CD8-positive, alpha-beta T cell (primary cell): ENCODE measurements at regions of chr4 and their contacts with region 1.

Region 1: DNA sequence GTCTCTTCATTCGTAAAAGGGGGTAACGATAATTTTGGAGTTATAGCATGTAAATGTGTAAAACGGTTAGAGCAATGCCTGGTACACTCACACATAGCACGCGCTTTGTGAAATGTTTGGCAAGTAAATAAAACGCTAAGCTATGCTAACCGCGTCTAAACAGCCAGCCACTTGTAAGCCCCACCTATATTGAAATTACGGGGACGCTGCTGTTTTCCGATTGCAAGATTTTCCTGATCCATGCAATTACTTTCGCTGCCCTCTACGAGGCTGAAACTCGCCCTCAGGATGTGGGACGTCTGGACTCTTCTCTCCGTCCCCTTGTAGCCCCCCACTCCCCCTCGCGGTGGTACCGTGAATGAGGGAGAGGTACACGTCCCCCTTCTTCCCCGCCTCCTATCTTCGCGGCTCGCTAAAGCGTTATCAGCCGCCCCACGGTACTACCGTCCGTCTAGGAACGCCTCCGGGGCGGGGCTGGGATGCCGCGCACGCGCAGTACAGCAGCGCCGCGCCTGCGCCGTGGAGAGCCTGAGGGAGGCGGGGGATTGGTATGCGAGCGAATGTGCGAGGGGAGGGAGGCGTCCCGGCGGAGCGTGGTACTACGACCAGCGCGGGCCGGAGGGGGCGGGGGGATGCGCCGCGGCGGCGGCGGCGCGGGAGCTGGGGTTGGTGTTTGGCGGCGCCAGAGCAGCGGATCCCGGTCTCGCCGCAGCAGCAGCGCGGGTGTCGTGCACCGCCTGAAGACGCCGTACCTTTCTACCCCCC is at the start of gene STIM2:
- DNase-seq: peak; percentile 95 to 100 (median 98)
- ATAC-seq: peak; percentile 62
- H3K4me3 ChIP-seq: peak within 1 kb of the TSS; percentile 70 to 83
- H3K4me3 Mint-ChIP-seq: peak within 1 kb of the TSS; percentile 99
- H3K27ac ChIP-seq: peak within 1 kb of the TSS; percentile 82 to 83
- H3K27ac Mint-ChIP-seq: peak within 1 kb of the TSS; percentile 99
- H3K4me1 ChIP-seq: peaks cover 60% of the 10 kb centered on the region
- H3K4me1 Mint-ChIP-seq: peaks cover 63% of the 10 kb centered on the region
- H3K27me3 ChIP-seq: no peaks in the 10 kb centered on the region
- H3K27me3 Mint-ChIP-seq: no peaks in the 10 kb centered on the region
- CTCF ChIP-seq: no peak
- total RNA-seq, gene STIM2: 61.1 to 67.0 TPM

Region 2: DNA sequence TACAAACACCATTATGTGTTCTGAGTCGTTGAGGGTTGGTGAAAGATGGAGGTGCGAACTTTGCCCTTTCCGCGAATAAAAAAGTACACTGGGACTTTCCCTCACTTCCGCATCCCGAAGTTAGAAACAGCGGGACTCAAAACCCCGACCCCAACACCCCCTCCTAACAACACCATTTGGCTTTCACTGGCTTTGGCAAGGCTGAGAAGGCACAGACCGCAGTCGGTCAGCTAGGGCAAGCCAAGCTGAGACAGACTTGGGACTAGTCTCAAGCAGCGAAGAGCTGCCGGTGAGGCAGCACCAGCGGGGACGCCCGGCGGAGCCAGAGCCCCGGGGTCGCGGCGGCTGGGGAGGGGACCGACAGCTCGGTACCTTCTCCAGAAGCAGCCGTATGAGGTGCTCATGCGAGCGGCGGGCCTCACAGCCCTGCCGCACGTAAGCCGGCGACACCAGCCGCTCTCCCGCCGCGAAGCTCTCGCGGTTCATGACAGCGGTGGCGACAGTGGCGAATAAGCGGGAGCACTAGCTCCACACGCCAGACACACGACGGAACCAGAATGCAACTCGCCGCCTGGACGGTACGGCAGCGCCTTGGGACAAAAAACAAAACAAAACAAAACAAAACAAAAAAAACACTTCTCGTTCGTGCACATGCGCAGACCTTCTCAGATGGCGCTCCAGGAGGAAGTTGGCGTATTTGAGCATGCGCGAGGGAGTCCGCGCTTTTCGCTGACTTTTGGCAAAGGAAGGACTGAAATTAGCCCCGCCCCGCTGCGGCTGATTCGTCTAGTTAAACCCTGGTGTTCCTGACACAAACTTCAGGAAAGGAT is 1700.2 kb before region 1 on chr4 and contains the start of gene SEPSECS:
- CTCF ChIA-PET with region 1: no interaction called
- POLR2A ChIA-PET with region 1: no interaction called
- intact Hi-C with region 1: loop called in 1 of 2 experiments (anchors 10 kb)
- DNase-seq: peak; percentile 82 to 99 (median 94)
- ATAC-seq: peak; percentile 79
- H3K4me3 ChIP-seq: peak within 1 kb of the TSS; percentile 60 to 79
- H3K4me3 Mint-ChIP-seq: peak within 1 kb of the TSS; percentile 91
- H3K27ac ChIP-seq: peak within 1 kb of the TSS; percentile 97 to 98
- H3K27ac Mint-ChIP-seq: peak within 1 kb of the TSS; percentile 94
- H3K4me1 ChIP-seq: peaks cover 18% of the 10 kb centered on the region
- H3K4me1 Mint-ChIP-seq: peaks cover 52% of the 10 kb centered on the region
- H3K27me3 ChIP-seq: no peaks in the 10 kb centered on the region
- H3K27me3 Mint-ChIP-seq: no peaks in the 10 kb centered on the region
- CTCF ChIP-seq: no peak
- total RNA-seq, gene SEPSECS: 12.5 to 13.4 TPM

Region 3: DNA sequence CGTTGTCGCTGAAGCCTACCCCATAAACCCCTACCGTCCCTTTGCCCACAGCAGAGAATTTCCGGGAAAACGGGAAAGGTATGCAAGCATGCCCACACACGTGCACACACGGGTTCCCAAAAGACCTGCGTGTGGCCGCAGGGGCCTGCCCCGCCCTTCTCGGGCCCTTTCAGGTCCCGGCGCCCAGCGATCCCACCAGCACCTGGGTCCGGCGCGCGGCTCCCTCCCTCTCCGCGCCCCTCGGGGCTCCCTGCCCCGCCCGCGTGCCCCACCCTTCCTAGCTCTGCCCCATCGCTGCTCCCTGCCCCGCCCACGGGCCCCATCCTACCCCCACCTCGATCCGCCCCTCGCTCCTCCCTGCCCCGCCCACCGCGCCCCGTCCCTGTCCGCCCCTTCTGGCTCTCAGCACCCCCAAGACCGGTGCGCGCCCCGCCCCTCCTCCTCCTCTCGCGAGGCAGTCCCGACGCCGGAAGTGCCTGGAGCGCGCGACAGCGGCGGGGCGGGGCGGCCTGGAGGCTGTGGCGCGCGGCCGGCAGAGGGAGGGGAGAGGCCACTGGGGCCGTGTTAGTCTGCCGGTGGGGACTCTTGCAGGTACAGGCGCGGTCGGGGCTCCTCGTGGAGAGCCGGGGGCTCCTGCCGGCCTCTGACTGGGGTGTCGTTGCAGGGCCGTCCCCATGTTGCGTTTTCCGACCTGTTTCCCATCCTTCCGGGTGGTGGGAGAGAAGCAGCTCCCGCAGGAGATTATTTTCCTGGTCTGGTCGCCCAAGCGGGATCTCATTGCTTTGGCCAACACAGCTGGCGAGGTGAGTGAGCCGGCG is 1483.4 kb before region 1 on chr4 and contains the start of gene ANAPC4:
- CTCF ChIA-PET with region 1: no interaction called
- POLR2A ChIA-PET with region 1: no interaction called
- intact Hi-C with region 1: loop called (anchors 2 to 5 kb)
- DNase-seq: peak; percentile 95 to 100 (median 98)
- ATAC-seq: peak; percentile 95
- H3K4me3 ChIP-seq: peak within 1 kb of the TSS; percentile 89 to 96
- H3K4me3 Mint-ChIP-seq: no peak within 1 kb of the TSS
- H3K27ac ChIP-seq: peak within 1 kb of the TSS; percentile 60 to 64
- H3K27ac Mint-ChIP-seq: peak within 1 kb of the TSS; percentile 90
- H3K4me1 ChIP-seq: peaks cover 21% of the 10 kb centered on the region
- H3K4me1 Mint-ChIP-seq: peaks cover 16% of the 10 kb centered on the region
- H3K27me3 ChIP-seq: no peaks in the 10 kb centered on the region
- H3K27me3 Mint-ChIP-seq: no peaks in the 10 kb centered on the region
- CTCF ChIP-seq: no peak
- total RNA-seq, gene ANAPC4: 28.0 to 30.5 TPM

Region 4: GRCh38 chr4:26319467-26319948 is 540.8 kb before region 1 on chr4:
- CTCF ChIA-PET with region 1: no interaction called
- POLR2A ChIA-PET with region 1: interaction called, 4 read pairs
- intact Hi-C with region 1: loop called (anchors 1 to 2 kb)
- DNase-seq: peak; percentile 91 to 99 (median 96)
- ATAC-seq: peak; percentile 60
- H3K4me3 ChIP-seq: peak overlapping the region; percentile 91 to 100
- H3K4me3 Mint-ChIP-seq: peak overlapping the region; percentile 99
- H3K27ac ChIP-seq: peak overlapping the region; percentile 83 to 89
- H3K27ac Mint-ChIP-seq: peak overlapping the region; percentile 100
- H3K4me1 ChIP-seq: peaks cover 14% of the 10 kb centered on the region
- H3K4me1 Mint-ChIP-seq: peaks cover 37% of the 10 kb centered on the region
- H3K27me3 ChIP-seq: no peaks in the 10 kb centered on the region
- H3K27me3 Mint-ChIP-seq: no peaks in the 10 kb centered on the region
- CTCF ChIP-seq: no peak

Region 5: GRCh38 chr4:26885912-26886274 is 25.6 kb after region 1 on chr4:
- CTCF ChIA-PET with region 1: interaction called, 4 read pairs
- POLR2A ChIA-PET with region 1: interaction called, 81 read pairs
- intact Hi-C with region 1: loop called (anchors 1 to 2 kb)
- DNase-seq: peak in 4 of 9 experiments; percentile 39 to 89 (median 63)
- ATAC-seq: peak; percentile 67
- H3K4me3 ChIP-seq: peak overlapping the region; percentile 6 to 38
- H3K4me3 Mint-ChIP-seq: peak overlapping the region; percentile 81
- H3K27ac ChIP-seq: peak overlapping the region; percentile 68 to 92
- H3K27ac Mint-ChIP-seq: peak overlapping the region; percentile 97
- H3K4me1 ChIP-seq: peaks cover 57% of the 10 kb centered on the region
- H3K4me1 Mint-ChIP-seq: peaks cover 80% of the 10 kb centered on the region
- H3K27me3 ChIP-seq: no peaks in the 10 kb centered on the region
- H3K27me3 Mint-ChIP-seq: no peaks in the 10 kb centered on the region
- CTCF ChIP-seq: no peak

Region 6: GRCh38 chr4:26936284-26937065 is 76.1 kb after region 1 on chr4:
- CTCF ChIA-PET with region 1: no interaction called
- POLR2A ChIA-PET with region 1: interaction called, 3 read pairs
- intact Hi-C with region 1: loop called in 1 of 2 experiments (anchors 5 kb)
- DNase-seq: peak in 2 of 9 experiments; percentile 13 to 34
- ATAC-seq: peak; percentile 62
- H3K4me3 ChIP-seq: no peak overlapping the region
- H3K4me3 Mint-ChIP-seq: no peak overlapping the region
- H3K27ac ChIP-seq: no peak overlapping the region
- H3K27ac Mint-ChIP-seq: peak overlapping the region; percentile 15
- H3K4me1 ChIP-seq: peaks cover 47% of the 10 kb centered on the region
- H3K4me1 Mint-ChIP-seq: peaks cover 74% of the 10 kb centered on the region
- H3K27me3 ChIP-seq: no peaks in the 10 kb centered on the region
- H3K27me3 Mint-ChIP-seq: no peaks in the 10 kb centered on the region
- CTCF ChIP-seq: no peak